HepG2 (cell line): ENCODE measurements at regions of chr2 and their contacts with region 1.

Region 1: DNA sequence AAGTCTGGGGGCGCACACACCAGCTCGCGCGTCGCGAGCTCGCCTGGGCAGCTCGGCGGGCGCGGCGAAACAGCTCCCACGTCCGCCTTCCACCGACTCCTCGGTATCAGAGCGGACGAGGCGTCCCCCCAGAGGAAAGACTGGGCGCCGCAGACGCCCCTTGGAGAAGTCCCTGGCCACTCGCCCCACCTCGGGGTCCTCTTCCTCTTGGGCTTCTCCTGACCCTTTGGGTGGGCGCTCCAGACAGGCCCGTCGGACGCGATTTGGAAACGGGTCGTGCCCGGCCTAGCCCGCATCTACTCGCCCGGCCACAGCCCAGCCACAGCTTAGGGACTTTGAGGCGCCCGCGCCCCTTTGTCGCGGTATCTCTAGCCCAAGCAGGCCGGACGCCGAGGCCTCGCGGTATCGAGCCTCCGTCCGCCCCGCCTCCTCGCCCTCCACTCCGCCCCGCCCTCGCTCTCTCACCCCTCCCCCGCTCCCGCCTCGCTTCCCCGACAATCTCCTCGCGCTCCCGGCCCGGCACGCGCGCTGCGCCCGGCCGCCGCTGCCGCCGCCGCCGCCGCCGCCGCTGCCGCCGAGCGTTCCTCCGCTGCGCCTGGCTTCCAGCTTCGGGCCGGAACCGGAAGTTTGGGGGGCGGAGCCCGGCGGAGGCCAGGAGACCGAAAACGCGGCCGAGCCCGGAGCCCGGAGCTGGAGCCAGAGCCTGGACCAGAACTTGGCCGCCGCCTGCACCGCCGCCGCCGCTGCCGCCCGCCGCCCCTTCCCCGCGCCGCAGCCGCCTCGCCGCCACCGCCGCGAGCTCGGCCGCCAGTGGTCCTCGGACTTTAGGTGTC is 749 bp upstream of the ACVR2A start:
- DNase-seq: peak; percentile 82
- ATAC-seq: peak; percentile 95
- H3K4me3 ChIP-seq: peak overlapping the region; percentile 88 to 97 (median 94)
- H3K27ac ChIP-seq: peak overlapping the region; percentile 95
- H3K4me1 ChIP-seq: peaks cover 33% of the 10 kb centered on the region
- H3K27me3 ChIP-seq: peaks cover 0 to 5% of the 10 kb centered on the region in 2 experiments; a peak in 2 of 5 replicates
- CTCF ChIP-seq: peak; percentile 56
- EP300 ChIP-seq: peak in 1 of 2 experiments; percentile 4; a peak in 1 of 4 replicates
- POLR2A ChIP-seq: peak; percentile 65 to 86; a peak in 3 of 4 replicates
- RAD21 ChIP-seq: peak; percentile 75

Region 2: DNA sequence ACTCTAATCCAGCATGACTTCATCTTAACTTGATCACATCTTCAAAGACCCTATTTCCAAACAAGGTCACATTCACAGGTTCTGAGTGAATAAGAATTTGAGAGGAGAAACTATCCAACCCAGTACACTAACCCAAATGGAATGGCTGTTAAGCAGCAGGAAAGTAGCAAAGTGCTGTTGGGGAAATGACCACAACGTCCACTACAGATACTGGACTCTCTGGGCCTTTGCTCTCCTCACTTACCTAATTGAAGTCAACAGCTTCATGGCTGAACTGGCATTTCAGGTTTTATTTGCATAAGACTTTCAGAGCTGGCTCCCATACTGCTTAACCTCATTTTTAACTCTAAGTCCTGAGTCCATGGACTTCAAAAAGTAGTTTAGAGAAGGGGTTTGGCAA is 37.2 kb before region 1 on chr2:
- CTCF ChIA-PET with region 1: no interaction called
- POLR2A ChIA-PET with region 1: interaction called, 10 read pairs
- in situ Hi-C with region 1: no loop called
- intact Hi-C with region 1: loop called (anchors 1 kb)
- DNase-seq: no peak
- ATAC-seq: peak; percentile 49
- H3K4me3 ChIP-seq: no peak overlapping the region
- H3K27ac ChIP-seq: no peak overlapping the region
- H3K4me1 ChIP-seq: peaks cover 20% of the 10 kb centered on the region
- H3K27me3 ChIP-seq: no peaks in the 10 kb centered on the region
- CTCF ChIP-seq: no peak
- EP300 ChIP-seq: no peak
- POLR2A ChIP-seq: no peak
- RAD21 ChIP-seq: no peak

Region 3: DNA sequence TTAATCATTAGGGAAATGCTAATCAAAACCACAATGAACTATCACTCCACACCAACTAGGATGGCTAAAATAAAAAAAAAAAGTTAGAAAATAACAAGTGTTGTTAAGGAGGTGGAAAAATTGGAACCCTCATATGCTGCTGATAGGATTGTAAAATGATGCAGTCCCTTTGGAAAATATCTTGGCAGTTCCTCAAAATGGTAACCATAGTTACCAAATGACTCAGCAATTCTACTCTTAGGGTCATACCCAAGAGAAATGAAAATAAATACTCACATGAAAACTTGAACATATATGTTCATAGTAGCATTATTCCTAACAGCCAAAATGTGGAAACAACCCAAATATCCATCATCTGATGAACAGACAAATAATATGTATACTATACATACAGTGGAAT is 15.0 kb before region 1 on chr2:
- CTCF ChIA-PET with region 1: no interaction called
- POLR2A ChIA-PET with region 1: interaction called, 4 read pairs
- in situ Hi-C with region 1: no loop called
- intact Hi-C with region 1: loop called (anchors 2 kb)
- DNase-seq: no peak
- ATAC-seq: no peak
- H3K4me3 ChIP-seq: no peak overlapping the region
- H3K27ac ChIP-seq: no peak overlapping the region
- H3K4me1 ChIP-seq: no peaks in the 10 kb centered on the region
- H3K27me3 ChIP-seq: no peaks in the 10 kb centered on the region
- CTCF ChIP-seq: no peak
- EP300 ChIP-seq: no peak; a peak in 1 of 4 replicates
- POLR2A ChIP-seq: no peak
- RAD21 ChIP-seq: no peak

Region 4: DNA sequence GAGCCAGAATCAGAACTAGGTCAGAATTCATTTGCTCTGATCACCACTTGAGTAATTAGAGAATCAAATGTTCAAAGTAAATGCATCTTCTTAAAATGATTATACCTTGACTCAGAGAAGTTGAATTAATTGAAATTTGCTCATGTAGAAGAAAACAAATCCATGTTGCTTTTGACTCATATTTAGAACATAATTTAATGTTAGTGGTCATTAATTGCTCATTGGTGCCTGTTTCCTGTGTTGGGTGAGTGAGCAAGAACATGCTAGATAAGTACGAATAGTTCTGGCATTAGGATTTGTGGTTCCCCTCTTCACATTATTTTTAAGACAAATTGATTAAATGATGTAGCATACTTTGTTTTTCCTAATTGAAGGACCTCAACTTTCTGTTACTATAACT is 19.8 kb after region 1 on chr2:
- CTCF ChIA-PET with region 1: no interaction called
- POLR2A ChIA-PET with region 1: interaction called, 9 read pairs
- in situ Hi-C with region 1: no loop called
- intact Hi-C with region 1: loop called (anchors 2 kb)
- DNase-seq: no peak
- ATAC-seq: no peak
- H3K4me3 ChIP-seq: no peak overlapping the region
- H3K27ac ChIP-seq: no peak overlapping the region
- H3K4me1 ChIP-seq: peaks cover 24% of the 10 kb centered on the region
- H3K27me3 ChIP-seq: no peaks in the 10 kb centered on the region
- CTCF ChIP-seq: no peak
- EP300 ChIP-seq: no peak
- POLR2A ChIP-seq: no peak
- RAD21 ChIP-seq: no peak

Region 5: DNA sequence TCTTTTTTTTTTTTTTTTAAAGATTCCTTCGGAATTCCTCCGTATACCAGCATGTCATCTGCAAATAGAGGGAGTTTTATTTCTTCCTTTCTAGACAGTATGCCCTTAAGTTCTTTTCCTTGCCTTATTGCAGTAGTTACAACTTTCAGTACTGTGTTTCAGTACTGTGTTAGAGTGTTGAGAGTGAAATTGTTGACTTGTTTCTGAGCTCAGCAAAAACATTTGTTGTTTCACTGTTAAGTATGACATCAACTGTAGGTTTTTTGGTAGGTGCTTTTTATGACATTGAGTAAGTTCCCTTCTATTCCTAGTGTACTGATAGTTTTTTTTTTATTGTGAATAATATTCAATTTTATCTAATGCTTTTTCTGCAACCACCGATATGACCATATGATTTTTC is 44.6 kb after region 1 on chr2:
- CTCF ChIA-PET with region 1: no interaction called
- POLR2A ChIA-PET with region 1: no interaction called
- in situ Hi-C with region 1: no loop called
- intact Hi-C with region 1: loop called (anchors 10 kb)
- DNase-seq: no peak
- ATAC-seq: no peak
- H3K4me3 ChIP-seq: no peak overlapping the region
- H3K27ac ChIP-seq: no peak overlapping the region
- H3K4me1 ChIP-seq: peaks cover 12% of the 10 kb centered on the region
- H3K27me3 ChIP-seq: no peaks in the 10 kb centered on the region
- CTCF ChIP-seq: no peak
- EP300 ChIP-seq: no peak
- POLR2A ChIP-seq: no peak
- RAD21 ChIP-seq: no peak

Region 6: GRCh38 chr2:147925886-147926285 is 81.8 kb after region 1 on chr2:
- CTCF ChIA-PET with region 1: no interaction called
- POLR2A ChIA-PET with region 1: interaction called, 13 read pairs
- in situ Hi-C with region 1: no loop called
- intact Hi-C with region 1: loop called (anchors 1 kb)
- DNase-seq: no peak
- ATAC-seq: no peak
- H3K4me3 ChIP-seq: no peak overlapping the region
- H3K27ac ChIP-seq: peak overlapping the region; percentile 89
- H3K4me1 ChIP-seq: peaks cover 50% of the 10 kb centered on the region
- H3K27me3 ChIP-seq: no peaks in the 10 kb centered on the region
- CTCF ChIP-seq: no peak
- EP300 ChIP-seq: no peak
- POLR2A ChIP-seq: no peak
- RAD21 ChIP-seq: no peak

Region 7: DNA sequence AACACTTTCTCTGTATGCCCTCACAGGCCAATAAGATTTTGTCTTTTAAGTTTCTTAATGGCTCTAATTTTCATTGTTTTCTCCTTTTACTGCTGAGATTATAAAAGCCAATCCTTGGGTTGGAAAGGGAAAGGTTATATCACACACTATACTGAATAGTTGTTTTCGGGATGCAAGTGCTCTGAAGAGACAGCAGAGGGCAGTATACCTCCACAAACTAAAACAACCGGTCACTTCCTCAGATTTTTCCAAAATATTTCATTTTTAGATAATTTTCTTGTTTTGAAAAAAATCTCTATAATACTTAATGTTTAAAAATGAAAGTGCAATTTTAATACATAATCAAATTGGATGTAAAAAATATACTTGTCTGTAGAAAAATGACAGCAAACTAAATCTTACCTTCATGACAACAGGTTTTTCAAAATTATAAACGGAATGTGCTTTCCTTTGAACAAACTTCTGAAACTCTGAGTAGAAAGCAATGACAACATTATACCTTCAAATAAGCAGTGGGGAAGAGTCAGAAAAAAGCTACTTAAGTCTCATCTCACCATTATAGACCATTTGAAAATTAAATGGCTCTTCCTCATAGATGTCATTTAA is 93.8 kb after region 1 on chr2:
- CTCF ChIA-PET with region 1: no interaction called
- POLR2A ChIA-PET with region 1: no interaction called
- in situ Hi-C with region 1: no loop called
- intact Hi-C with region 1: no loop called
- DNase-seq: peak; percentile 40
- ATAC-seq: peak; percentile 77
- H3K4me3 ChIP-seq: no peak overlapping the region
- H3K27ac ChIP-seq: no peak overlapping the region
- H3K4me1 ChIP-seq: peaks cover 10% of the 10 kb centered on the region
- H3K27me3 ChIP-seq: no peaks in the 10 kb centered on the region
- CTCF ChIP-seq: peak; percentile 80
- EP300 ChIP-seq: no peak
- POLR2A ChIP-seq: no peak
- RAD21 ChIP-seq: peak; percentile 78; the same call in 1 of the 2 replicates

Region 8: GRCh38 chr2:147989809-147990403 is 145.8 kb after region 1 on chr2:
- CTCF ChIA-PET with region 1: no interaction called
- POLR2A ChIA-PET with region 1: no interaction called
- in situ Hi-C with region 1: no loop called
- intact Hi-C with region 1: no loop called
- DNase-seq: peak; percentile 47
- ATAC-seq: peak; percentile 70
- H3K4me3 ChIP-seq: no peak overlapping the region
- H3K27ac ChIP-seq: no peak overlapping the region
- H3K4me1 ChIP-seq: 0 out of 2 replicates have a peak, but pooled peaks cover 5% of the 10 kb centered on the region
- H3K27me3 ChIP-seq: no peaks in the 10 kb centered on the region
- CTCF ChIP-seq: peak; percentile 40
- EP300 ChIP-seq: no peak
- POLR2A ChIP-seq: no peak
- RAD21 ChIP-seq: peak; percentile 67

Region 9: GRCh38 chr2:148644883-148645538 is 800.9 kb after region 1 on chr2:
- CTCF ChIA-PET with region 1: no interaction called
- POLR2A ChIA-PET with region 1: no interaction called
- in situ Hi-C with region 1: no loop called
- intact Hi-C with region 1: loop called (anchors 10 kb)
- DNase-seq: peak; percentile 91
- ATAC-seq: peak; percentile 74
- H3K4me3 ChIP-seq: peak overlapping the region; percentile 91 to 94 (median 93)
- H3K27ac ChIP-seq: peak overlapping the region; percentile 91
- H3K4me1 ChIP-seq: peaks cover 46% of the 10 kb centered on the region
- H3K27me3 ChIP-seq: peaks cover 0 to 6% of the 10 kb centered on the region in 2 experiments; a peak in 3 of 5 replicates
- CTCF ChIP-seq: peak; percentile 67
- EP300 ChIP-seq: no peak
- POLR2A ChIP-seq: peak; percentile 64 to 87
- RAD21 ChIP-seq: no peak; the same call in 1 of the 2 replicates